ENCODE measurements at regions of chr11 and their contacts with region 1.

Region 1: DNA sequence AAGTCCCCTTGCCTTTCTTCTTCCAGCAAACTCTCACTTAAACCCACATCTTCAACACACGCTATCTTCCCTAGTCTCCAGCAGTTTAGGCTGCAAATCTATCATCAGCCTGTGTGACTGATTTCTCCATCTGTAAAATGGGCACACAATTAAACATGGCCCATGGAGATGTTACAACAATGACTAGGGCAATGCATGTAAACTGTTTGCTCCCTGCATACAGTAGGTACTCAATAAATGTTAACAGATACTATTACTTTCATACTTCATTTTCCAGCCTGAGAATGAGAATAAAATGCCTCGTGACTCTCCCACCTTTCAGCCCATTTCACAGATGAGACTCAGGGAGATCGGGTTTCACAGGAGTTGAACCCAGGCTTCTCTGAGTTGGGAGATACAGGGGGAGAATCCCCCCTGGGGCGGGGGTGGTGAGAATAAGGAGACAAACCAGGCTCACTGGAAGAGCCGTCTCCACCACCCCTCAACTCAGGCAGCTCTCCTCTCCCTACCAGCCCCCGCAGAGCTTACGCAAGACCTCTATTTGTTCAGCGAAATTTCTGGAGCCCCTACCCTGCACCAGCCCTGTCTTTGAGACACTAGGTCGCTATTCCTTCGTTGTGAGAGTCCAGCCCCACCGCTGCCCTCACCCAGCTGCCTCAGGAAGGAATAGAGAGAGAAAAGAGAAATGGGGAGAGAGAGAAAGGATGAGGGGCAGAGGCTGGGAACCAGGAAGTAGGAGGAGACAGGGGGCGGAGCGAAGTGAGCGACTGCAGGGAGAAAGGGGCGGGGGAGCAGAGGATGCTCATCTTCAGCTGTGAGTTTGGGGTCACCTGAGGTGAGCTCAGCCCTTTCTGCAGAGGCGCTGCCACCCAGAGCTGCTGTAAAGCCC is 42.1 kb upstream of the KLHL35 start:
- DNase-seq: peak; percentile 82
- ATAC-seq: peak; percentile 83
- H3K4me3 Mint-ChIP-seq: peak overlapping the region; percentile 88
- H3K27ac Mint-ChIP-seq: peak overlapping the region; percentile 99
- H3K4me1 Mint-ChIP-seq: peaks cover 23% of the 10 kb centered on the region
- H3K27me3 Mint-ChIP-seq: peaks cover 2% of the 10 kb centered on the region

Region 2: DNA sequence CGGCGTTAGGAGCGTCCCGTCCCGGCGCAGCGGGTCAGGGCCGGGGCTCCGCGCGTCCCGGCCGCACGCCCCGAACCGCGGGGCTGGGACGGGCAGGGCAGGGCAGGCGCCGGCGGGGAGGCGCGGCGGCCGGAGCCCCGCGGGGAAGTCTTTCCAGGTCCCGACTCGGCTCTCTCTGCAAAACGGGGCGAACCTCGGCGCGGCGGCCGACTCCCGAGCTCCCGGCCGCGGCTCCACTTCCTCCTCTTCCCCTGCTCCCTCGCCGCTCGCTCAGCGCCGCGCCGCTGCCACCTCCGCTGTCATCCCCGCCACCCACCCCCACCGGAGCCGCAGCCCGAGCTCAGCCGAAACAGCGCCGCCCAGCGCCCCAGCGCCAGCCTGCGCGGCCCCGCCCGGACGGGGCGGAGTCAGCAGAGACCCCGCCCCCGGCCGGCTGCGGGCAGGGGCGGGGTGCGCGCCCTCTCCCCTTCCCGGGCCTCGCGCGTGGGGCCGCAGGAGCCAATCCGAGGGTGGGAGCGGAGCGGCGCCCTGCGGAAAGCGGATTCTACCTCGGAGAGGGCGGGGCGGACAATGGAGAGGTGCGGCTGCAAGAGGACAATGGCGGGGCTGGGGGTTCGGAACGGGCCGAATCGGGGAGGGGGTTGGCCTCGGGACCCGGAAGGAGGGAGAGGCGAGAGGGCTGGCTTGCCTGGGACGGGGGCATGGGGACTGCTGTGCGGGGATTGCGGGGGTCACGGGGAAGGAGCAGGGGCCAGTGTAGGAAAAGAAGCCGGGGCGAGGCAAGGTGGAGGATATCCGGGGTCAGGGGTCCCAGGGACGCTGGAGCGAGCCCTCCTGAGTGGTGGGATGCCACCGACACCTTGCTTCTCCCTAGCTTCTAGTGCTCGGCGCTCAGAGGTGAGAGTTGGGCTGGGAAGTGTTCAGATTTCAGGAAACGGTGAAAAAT is 50.7 kb after region 1 on chr11 and contains the start of gene GDPD5:
- POLR2A ChIA-PET with region 1: interaction called, 21 read pairs
- DNase-seq: peak; percentile 96
- ATAC-seq: peak; percentile 90
- H3K4me3 Mint-ChIP-seq: peak within 1 kb of the TSS; percentile 83
- H3K27ac Mint-ChIP-seq: peak within 1 kb of the TSS; percentile 80
- H3K4me1 Mint-ChIP-seq: peaks cover 30% of the 10 kb centered on the region
- H3K27me3 Mint-ChIP-seq: peaks cover 9% of the 10 kb centered on the region
- total RNA-seq, gene GDPD5: 35.7 to 38.4 TPM

Measured in activated naive CD8-positive, alpha-beta T cell treated with anti-CD3 and anti-CD28 coated beads, Interleukin-2, amount 10 ng/mL, durations not matched to agents 7 days and 5 days (primary cell).